ENCODE measurements at regions of chr2 and their contacts with region 1.

Region 1: DNA sequence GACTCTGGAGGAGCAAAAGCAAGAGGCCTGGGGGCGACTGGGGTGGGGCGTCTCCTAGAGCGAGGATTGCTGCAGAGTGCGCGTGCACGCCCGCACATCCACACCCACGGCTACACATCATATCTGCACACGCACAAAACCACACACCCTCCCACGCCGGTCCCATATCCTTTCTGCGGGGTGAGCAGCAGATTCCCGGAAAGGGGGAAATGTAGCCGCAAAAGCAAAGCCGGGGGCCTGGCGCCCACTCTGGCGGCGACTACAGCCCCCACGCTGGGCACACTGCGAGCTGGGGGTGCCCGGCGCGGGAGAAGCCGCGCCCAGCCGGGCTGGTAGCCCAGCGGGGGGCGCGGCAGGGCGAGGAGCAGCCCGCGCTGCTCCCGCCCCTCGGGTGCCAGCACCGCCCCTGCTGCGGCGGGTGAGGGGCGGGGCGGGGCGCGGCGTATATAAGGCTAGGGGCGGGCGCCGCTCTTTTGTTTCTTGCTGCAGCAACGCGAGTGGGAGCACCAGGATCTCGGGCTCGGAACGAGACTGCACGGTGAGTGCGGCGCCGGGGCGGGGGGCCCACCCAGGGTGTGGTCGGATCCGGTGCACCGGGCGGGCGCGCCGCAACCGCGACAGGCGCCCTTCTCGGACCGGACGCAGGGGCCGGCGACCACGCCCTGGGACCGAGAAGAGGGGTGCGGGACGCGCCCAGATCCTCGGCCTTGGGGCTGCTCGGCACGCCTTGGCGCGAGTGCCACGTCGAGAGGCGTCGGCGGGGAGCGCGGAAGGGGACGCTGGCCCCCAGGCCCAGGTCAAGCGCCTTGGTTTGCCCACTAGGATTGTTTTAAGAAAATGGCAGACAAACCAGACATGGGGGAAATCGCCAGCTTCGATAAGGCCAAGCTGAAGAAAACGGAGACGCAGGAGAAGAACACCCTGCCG is at the start of gene TMSB10:
- DNase-seq: peak; percentile 62 to 90
- H3K4me3 ChIP-seq: peak within 1 kb of the TSS; percentile 97
- H3K27ac ChIP-seq: peak within 1 kb of the TSS; percentile 80
- H3K4me1 ChIP-seq: peaks cover 21% of the 10 kb centered on the region
- H3K27me3 ChIP-seq: 0 out of 2 replicates have a peak, but pooled peaks cover 3% of the 10 kb centered on the region
- CTCF ChIP-seq: no peak
- total RNA-seq, gene TMSB10: 1,668 and 1,769 TPM in 2 replicates

Region 2: DNA sequence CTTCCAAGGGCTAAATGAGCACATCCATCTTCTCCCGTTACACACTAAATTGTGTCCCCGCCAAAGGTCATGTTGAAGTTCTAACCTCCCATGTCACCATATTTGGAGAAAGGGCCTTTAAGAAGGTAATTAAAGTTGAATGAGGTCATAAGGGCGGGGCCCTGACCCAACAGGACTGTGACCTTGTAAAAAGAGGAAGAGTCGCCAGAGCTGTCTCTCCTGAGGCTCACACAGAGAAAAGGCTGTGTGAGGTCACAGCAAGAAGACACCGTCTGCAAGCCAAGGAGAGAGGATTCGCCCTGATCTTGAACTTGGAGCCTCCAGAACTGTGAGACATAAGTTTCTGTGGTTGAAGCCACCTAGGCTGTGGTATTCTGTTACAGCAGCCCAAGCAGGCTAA is 48.7 kb before region 1 on chr2:
- CTCF ChIA-PET with region 1: no interaction called
- POLR2A ChIA-PET with region 1: no interaction called
- intact Hi-C with region 1: no loop called
- DNase-seq: no peak
- H3K4me3 ChIP-seq: no peak overlapping the region
- H3K27ac ChIP-seq: no peak overlapping the region
- H3K4me1 ChIP-seq: no peaks in the 10 kb centered on the region
- H3K27me3 ChIP-seq: peaks cover 45% of the 10 kb centered on the region
- CTCF ChIP-seq: no peak

Region 3: DNA sequence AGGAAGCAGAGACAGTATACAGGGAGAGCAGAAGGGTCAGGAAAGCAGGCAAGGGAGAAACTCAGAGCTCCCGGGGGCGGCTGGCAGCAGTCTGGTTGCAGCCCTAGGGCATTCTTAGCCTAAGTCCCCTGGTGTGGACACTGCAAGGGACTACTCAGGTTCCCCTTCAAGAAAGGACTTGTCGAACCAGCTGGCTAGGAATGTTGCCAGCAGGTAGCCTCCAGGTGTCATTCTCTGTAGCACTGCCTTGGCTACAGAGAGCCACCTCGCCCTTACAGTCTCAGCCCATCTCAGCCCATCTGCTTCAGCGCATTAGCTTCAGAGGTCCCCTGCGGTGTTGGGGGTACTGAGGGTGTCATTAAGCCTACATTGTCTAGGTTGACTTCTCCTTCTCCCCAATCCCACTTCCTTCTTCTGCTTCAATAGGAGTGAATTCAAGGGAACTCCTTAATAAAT is 11.3 kb before region 1 on chr2:
- CTCF ChIA-PET with region 1: no interaction called
- POLR2A ChIA-PET with region 1: interaction called, 10 read pairs
- intact Hi-C with region 1: no loop called
- DNase-seq: peak; percentile 66 to 76
- H3K4me3 ChIP-seq: no peak overlapping the region
- H3K27ac ChIP-seq: no peak overlapping the region
- H3K4me1 ChIP-seq: peaks cover 14% of the 10 kb centered on the region
- H3K27me3 ChIP-seq: no peaks in the 10 kb centered on the region
- CTCF ChIP-seq: no peak

Region 4: GRCh38 chr2:84946204-84947009 is 41.0 kb after region 1 on chr2:
- CTCF ChIA-PET with region 1: no interaction called
- POLR2A ChIA-PET with region 1: interaction called, 23 read pairs
- intact Hi-C with region 1: no loop called
- DNase-seq: peak; percentile 84 to 98
- H3K4me3 ChIP-seq: peak overlapping the region; percentile 27; the same call in 1 of the 2 replicates
- H3K27ac ChIP-seq: peak overlapping the region; percentile 94
- H3K4me1 ChIP-seq: peaks cover 52% of the 10 kb centered on the region
- H3K27me3 ChIP-seq: no peaks in the 10 kb centered on the region
- CTCF ChIP-seq: no peak

Region 5: DNA sequence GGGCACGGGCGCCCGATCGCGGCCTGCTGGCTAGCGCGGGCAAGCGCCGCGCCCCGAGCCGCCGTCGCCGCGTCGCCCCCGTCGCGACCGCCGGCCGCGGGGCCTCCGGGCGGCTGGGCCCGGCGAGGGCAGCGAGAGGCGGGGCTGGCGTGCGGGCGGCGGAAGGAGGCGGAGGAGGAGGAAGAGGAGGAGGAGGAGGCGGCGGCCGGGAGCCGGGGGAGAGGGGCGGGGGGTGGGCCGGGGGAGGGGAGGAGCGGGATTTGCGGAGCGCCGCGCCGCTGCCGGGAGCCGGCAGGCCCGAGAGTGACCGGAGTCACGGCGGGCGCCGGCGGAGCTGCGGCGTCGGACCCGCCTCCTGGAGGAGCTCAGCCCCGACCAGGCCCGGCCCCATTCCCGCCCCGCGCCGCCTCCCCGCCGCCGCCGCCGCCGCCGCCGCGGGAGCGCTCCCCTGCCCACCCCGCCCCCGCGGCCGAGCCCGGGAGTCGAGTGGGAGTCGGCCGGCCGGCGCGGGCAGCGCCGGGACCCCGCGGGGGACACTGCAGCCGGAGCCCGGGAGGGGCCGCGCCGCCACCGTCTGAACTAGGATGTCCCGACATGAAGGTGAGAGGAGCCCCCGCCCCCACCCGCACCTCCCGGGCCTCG is 65.5 kb after region 1 on chr2 and contains the start of gene KCMF1:
- CTCF ChIA-PET with region 1: no interaction called
- POLR2A ChIA-PET with region 1: no interaction called
- intact Hi-C with region 1: loop called (anchors 1 kb)
- DNase-seq: peak in 1 of 2 experiments; percentile 81
- H3K4me3 ChIP-seq: peak within 1 kb of the TSS; percentile 89
- H3K27ac ChIP-seq: peak within 1 kb of the TSS; percentile 84
- H3K4me1 ChIP-seq: peaks cover 34% of the 10 kb centered on the region
- H3K27me3 ChIP-seq: no peaks in the 10 kb centered on the region
- CTCF ChIP-seq: no peak
- total RNA-seq, gene KCMF1: 95.3 and 97.8 TPM in 2 replicates

Region 6: DNA sequence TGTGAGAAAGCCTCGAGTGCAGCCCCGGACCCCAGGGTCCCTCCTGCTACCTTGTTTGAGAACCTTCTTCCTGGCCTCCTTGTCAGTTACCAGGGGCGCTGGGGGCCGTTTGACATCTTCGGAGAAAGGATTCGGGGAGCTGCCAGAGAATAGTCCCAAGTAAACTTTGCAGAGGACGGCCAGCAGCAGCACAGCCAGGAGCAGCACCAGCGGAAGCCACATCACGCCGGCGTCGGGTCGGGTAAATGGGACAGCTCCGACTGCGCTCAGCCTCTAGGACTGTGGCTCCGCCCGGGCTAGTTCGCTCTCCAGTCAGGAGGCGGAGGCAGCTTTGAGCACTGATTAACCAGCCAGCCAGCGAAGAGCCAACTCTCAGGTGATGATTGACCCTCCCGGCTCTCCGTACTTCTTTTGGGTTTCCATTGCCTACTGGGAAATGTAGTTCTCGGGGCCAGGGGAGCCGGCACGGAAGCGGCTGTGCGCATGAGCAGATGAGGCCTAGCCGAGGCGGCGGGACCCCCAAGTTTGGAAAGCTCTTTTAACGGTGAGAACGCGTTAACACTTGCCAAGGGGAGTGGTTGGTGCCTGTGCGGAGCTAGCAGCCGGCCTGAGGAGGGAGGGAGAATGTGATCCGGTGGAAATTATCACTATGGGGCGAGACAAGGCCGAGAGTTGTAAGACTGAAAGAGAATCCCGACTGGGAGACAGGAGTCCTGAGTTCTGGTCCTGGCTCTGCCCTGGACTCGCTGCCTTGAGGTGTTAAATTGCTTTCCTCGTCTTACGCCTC is 449.0 kb after region 1 on chr2 and contains the starts of genes ELMOD3 and RETSAT:
- CTCF ChIA-PET with region 1: no interaction called
- POLR2A ChIA-PET with region 1: interaction called, 3 read pairs
- intact Hi-C with region 1: loop called (anchors 5 kb)
- DNase-seq: peak; percentile 96
- H3K4me3 ChIP-seq: peak within 1 kb of the TSS; percentile 87
- H3K27ac ChIP-seq: peak within 1 kb of the TSS; percentile 62
- H3K4me1 ChIP-seq: peaks cover 16% of the 10 kb centered on the region
- H3K27me3 ChIP-seq: no peaks in the 10 kb centered on the region
- CTCF ChIP-seq: no peak
- total RNA-seq, gene ELMOD3: 16.4 and 18.1 TPM in 2 replicates
- total RNA-seq, gene RETSAT: 52.1 and 57.8 TPM in 2 replicates

Region 7: DNA sequence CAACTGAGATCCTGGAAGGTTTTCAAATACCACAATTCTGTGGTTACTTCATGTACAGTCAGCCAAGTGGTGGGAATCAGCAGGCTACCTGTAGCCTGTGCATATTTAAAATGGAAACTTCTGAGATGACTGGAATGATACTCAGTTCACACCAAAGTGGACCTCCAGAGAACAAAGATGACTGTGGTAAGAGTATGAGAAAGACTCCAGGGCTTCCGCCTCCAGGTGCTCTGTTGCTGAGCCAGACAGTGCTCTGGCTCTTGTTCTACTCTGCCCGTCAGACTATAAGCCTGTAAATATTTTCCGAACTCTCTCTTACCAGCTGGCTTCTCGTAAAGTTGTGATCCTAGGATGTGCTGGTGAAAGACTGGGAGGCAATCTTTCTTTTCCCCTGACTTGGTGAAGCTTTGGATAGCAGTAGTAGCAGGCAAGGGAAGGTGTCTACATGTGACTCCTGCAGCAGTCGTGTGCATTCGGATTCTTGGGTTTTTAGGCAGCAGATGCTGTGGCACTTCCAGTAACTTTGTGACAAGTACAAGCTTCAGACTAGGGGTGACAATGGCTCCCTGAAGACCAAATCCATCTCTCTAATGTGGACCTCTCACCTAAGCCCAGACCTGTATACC is 960.2 kb after region 1 on chr2:
- CTCF ChIA-PET with region 1: no interaction called
- POLR2A ChIA-PET with region 1: no interaction called
- intact Hi-C with region 1: no loop called
- DNase-seq: no peak
- H3K4me3 ChIP-seq: no peak overlapping the region
- H3K27ac ChIP-seq: no peak overlapping the region
- H3K4me1 ChIP-seq: no peaks in the 10 kb centered on the region
- H3K27me3 ChIP-seq: no peaks in the 10 kb centered on the region
- CTCF ChIP-seq: no peak

Measured in PC-9 (cell line).